ENCODE measurements at regions of chr9 and their contacts with region 1.

Region 1: GRCh38 chr9:73081979-73082657 is 69.5 kb upstream of the ANXA1 start:
- DNase-seq: peak in 3 of 5 donors; percentile 11 to 28 (median 13)
- H3K4me3 ChIP-seq: no peak overlapping the region
- H3K4me3 Mint-ChIP-seq: no peak overlapping the region
- H3K27ac ChIP-seq: no peak overlapping the region
- H3K27ac Mint-ChIP-seq: no peak overlapping the region
- H3K4me1 ChIP-seq: no peaks in the 10 kb centered on the region
- H3K4me1 Mint-ChIP-seq: no peaks in the 10 kb centered on the region
- H3K27me3 ChIP-seq: no peaks in the 10 kb centered on the region
- H3K27me3 Mint-ChIP-seq: peaks cover 10 to 21% of the 10 kb centered on the region in 2 donors

Region 2: DNA sequence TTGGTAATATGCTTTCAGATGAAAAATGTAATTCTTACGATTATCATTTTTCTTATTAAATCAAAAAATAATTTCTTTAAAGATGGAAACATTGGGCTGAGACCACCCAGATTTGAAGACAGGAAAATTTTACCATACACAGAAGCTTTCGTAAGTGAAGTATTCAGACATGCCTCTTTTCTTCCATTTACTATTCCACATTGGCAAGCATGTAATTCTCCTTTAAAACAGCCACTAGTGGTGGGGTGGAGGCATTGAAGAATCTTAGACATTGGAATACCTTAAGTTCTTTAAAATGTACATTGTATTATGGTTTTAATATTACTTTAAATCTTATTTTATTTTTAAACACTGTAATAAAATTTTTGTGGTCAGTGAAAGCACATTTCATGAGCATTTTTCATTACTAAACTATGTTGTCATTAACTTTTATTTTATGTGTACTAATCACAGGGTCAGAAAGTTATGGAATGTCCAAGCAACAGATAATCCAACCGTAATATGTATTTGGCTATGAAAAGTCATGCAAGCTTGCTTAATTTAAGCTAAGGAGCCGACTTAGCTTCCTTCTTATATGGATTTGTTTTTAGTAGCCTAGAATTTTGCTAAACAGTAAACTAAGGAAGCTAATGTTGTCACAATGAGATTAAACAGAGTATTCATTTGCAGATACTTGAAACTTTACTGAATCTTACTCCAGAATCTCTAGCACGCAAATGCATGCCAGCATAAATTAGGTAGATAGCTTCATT is 31.9 kb before region 1 on chr9:
- CTCF ChIA-PET with region 1: no interaction called
- POLR2A ChIA-PET with region 1: no interaction called
- intact Hi-C with region 1: no loop called
- DNase-seq: no peak
- H3K4me3 ChIP-seq: no peak overlapping the region
- H3K4me3 Mint-ChIP-seq: no peak overlapping the region
- H3K27ac ChIP-seq: no peak overlapping the region
- H3K27ac Mint-ChIP-seq: no peak overlapping the region
- H3K4me1 ChIP-seq: no peaks in the 10 kb centered on the region
- H3K4me1 Mint-ChIP-seq: no peaks in the 10 kb centered on the region
- H3K27me3 ChIP-seq: no peaks in the 10 kb centered on the region
- H3K27me3 Mint-ChIP-seq: peaks cover 6 to 11% of the 10 kb centered on the region in 2 donors

Region 3: GRCh38 chr9:73061146-73061545 is 21.0 kb before region 1 on chr9:
- CTCF ChIA-PET with region 1: interaction called, 10 read pairs
- POLR2A ChIA-PET with region 1: no interaction called
- intact Hi-C with region 1: no loop called
- DNase-seq: no peak
- H3K4me3 ChIP-seq: no peak overlapping the region
- H3K4me3 Mint-ChIP-seq: no peak overlapping the region
- H3K27ac ChIP-seq: no peak overlapping the region
- H3K27ac Mint-ChIP-seq: no peak overlapping the region
- H3K4me1 ChIP-seq: no peaks in the 10 kb centered on the region
- H3K4me1 Mint-ChIP-seq: no peaks in the 10 kb centered on the region
- H3K27me3 ChIP-seq: no peaks in the 10 kb centered on the region
- H3K27me3 Mint-ChIP-seq: peaks cover 2 to 5% of the 10 kb centered on the region in 2 donors

Region 4: GRCh38 chr9:73093740-73094379 is 11.7 kb after region 1 on chr9:
- CTCF ChIA-PET with region 1: interaction called, 14 read pairs
- POLR2A ChIA-PET with region 1: no interaction called
- intact Hi-C with region 1: no loop called
- DNase-seq: no peak
- H3K4me3 ChIP-seq: peak overlapping the region in 1 of 2 donors; percentile 39
- H3K4me3 Mint-ChIP-seq: peak overlapping the region in 7 of 8 donors; percentile 39 to 84 (median 68)
- H3K27ac ChIP-seq: no peak overlapping the region
- H3K27ac Mint-ChIP-seq: no peak overlapping the region
- H3K4me1 ChIP-seq: peaks cover 10% of the 10 kb centered on the region
- H3K4me1 Mint-ChIP-seq: peaks cover 2 to 5% (median 4%) of the 10 kb centered on the region in 4 donors
- H3K27me3 ChIP-seq: no peaks in the 10 kb centered on the region
- H3K27me3 Mint-ChIP-seq: peaks cover 0 to 3% of the 10 kb centered on the region in 2 donors